ENCODE measurements at regions of chr16 and their contacts with region 1.

Region 1: GRCh38 chr16:27444015-27444414 is 42.0 kb downstream of the IL21R start:
- DNase-seq: no peak
- ATAC-seq: no peak
- H3K4me3 ChIP-seq: no peak overlapping the region
- H3K27ac ChIP-seq: no peak overlapping the region
- H3K4me1 ChIP-seq: peaks cover 27% of the 10 kb centered on the region
- H3K27me3 ChIP-seq: no peaks in the 10 kb centered on the region
- CTCF ChIP-seq: no peak
- EP300 ChIP-seq: no peak
- POLR2A ChIP-seq: peak; percentile 47
- RAD21 ChIP-seq: no peak

Region 2: GRCh38 chr16:26987597-26988010 is 456.4 kb before region 1 on chr16:
- CTCF ChIA-PET with region 1: no interaction called
- POLR2A ChIA-PET with region 1: no interaction called
- RAD21 ChIA-PET with region 1: no interaction called
- SMC1A ChIA-PET with region 1: no interaction called
- in situ Hi-C with region 1: no loop called
- intact Hi-C with region 1: no loop called
- DNase-seq: no peak
- ATAC-seq: no peak
- H3K4me3 ChIP-seq: no peak overlapping the region
- H3K27ac ChIP-seq: no peak overlapping the region
- H3K4me1 ChIP-seq: no peaks in the 10 kb centered on the region
- H3K27me3 ChIP-seq: no peaks in the 10 kb centered on the region; a peak in 2 of 4 replicates
- CTCF ChIP-seq: no peak
- EP300 ChIP-seq: no peak
- POLR2A ChIP-seq: no peak
- RAD21 ChIP-seq: no peak

Region 3: GRCh38 chr16:27431773-27432532 is 12.1 kb before region 1 on chr16:
- CTCF ChIA-PET with region 1: interaction called, 10 read pairs
- POLR2A ChIA-PET with region 1: interaction called, 35 read pairs
- RAD21 ChIA-PET with region 1: interaction called, 31 read pairs
- SMC1A ChIA-PET with region 1: interaction called, 48 read pairs
- in situ Hi-C with region 1: no loop called
- intact Hi-C with region 1: no loop called
- DNase-seq: no peak
- ATAC-seq: no peak; the same call in 2 of the 3 replicates
- H3K4me3 ChIP-seq: no peak overlapping the region
- H3K27ac ChIP-seq: peak overlapping the region; percentile 88
- H3K4me1 ChIP-seq: peaks cover 58% of the 10 kb centered on the region
- H3K27me3 ChIP-seq: no peaks in the 10 kb centered on the region
- CTCF ChIP-seq: no peak
- EP300 ChIP-seq: no peak
- POLR2A ChIP-seq: no peak; the same call in none of the 2 replicates
- RAD21 ChIP-seq: no peak

Region 4: DNA sequence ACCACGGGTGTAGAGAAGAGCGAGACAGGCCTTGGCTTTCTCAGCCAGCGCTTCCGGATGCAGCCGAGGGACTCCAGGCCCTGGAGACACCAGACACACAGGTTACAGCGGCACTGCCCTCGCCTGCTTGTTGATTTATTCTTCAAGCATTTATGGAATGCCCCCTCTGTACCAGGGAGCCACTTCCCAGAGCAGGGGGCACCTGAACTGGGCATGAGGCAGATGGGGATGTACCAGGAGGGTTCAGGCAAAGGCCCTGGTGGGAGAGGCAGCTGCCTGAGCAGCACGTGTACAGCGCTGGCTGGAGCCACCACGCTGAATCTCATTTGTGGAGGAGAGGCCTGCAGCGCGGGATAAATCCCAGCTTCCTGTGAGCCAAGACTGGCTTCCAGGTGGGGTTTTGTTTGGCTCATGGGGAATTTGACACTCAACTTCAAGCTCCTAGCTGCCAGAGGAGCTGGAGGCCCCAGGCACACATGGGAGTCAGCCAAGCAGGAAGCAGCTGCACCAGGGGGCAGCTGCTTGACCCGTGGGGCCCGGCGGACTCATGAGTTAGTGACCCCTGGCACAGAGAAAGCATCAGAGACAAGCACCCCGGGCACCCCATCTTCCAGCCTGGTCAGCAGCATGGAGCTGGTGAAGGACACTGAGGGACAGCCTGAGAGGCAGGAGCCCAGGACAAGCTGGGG is 17.6 kb after region 1 on chr16:
- CTCF ChIA-PET with region 1: no interaction called
- POLR2A ChIA-PET with region 1: no interaction called
- RAD21 ChIA-PET with region 1: no interaction called
- SMC1A ChIA-PET with region 1: no interaction called
- in situ Hi-C with region 1: no loop called
- intact Hi-C with region 1: no loop called
- DNase-seq: no peak
- ATAC-seq: no peak
- H3K4me3 ChIP-seq: no peak overlapping the region
- H3K27ac ChIP-seq: no peak overlapping the region
- H3K4me1 ChIP-seq: peaks cover 4% of the 10 kb centered on the region
- H3K27me3 ChIP-seq: no peaks in the 10 kb centered on the region
- CTCF ChIP-seq: no peak
- EP300 ChIP-seq: no peak
- POLR2A ChIP-seq: no peak
- RAD21 ChIP-seq: no peak

Region 5: GRCh38 chr16:27759301-27759871 is 315.4 kb after region 1 on chr16:
- CTCF ChIA-PET with region 1: no interaction called
- POLR2A ChIA-PET with region 1: no interaction called
- RAD21 ChIA-PET with region 1: no interaction called
- SMC1A ChIA-PET with region 1: no interaction called
- in situ Hi-C with region 1: no loop called
- intact Hi-C with region 1: no loop called
- DNase-seq: no peak
- ATAC-seq: no peak
- H3K4me3 ChIP-seq: no peak overlapping the region
- H3K27ac ChIP-seq: no peak overlapping the region
- H3K4me1 ChIP-seq: no peaks in the 10 kb centered on the region
- H3K27me3 ChIP-seq: no peaks in the 10 kb centered on the region
- CTCF ChIP-seq: no peak
- EP300 ChIP-seq: no peak
- POLR2A ChIP-seq: no peak
- RAD21 ChIP-seq: no peak

Measured in GM12878 (cell line).